Testis (tissue), 5 donors: ENCODE measurements at regions of chr1 and their contacts with region 1.

Region 1: DNA sequence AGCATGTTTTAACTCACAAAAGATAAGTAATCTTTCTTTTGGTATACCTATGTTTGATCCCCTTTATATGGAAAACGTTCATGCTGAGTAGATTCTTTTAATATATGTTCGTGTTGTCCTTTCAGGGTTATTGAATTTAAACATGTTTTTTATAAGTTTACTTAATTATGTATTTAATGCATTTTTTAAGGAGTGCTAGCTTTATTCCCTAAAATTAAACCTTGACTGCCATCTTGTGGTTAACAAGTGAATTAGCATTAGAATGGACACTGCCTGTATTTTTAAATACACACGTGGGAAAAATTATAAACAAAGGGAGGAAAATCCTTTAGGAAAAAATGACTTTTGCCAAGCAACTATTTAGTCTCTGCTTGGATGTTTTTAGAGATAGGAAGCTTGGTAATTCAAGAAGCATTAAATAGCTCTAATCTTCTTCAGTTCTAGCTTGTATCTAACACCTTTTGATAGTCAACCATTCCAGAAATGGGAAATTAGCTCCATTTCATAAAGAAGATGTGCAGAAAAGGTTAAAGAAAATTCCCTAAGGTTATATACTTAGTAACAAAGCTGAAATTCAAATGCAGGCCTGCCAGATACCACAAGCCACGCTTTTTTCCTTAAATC is 43.0 kb downstream of the UBE2U start:
- DNase-seq: no peak
- H3K4me3 ChIP-seq: no peak overlapping the region
- H3K27ac ChIP-seq: no peak overlapping the region
- H3K4me1 ChIP-seq: no peaks in the 10 kb centered on the region
- H3K27me3 ChIP-seq: no peaks in the 10 kb centered on the region
- CTCF ChIP-seq: peak; percentile 51 to 81 (median 55)
- POLR2A ChIP-seq: no peak

Region 2: DNA sequence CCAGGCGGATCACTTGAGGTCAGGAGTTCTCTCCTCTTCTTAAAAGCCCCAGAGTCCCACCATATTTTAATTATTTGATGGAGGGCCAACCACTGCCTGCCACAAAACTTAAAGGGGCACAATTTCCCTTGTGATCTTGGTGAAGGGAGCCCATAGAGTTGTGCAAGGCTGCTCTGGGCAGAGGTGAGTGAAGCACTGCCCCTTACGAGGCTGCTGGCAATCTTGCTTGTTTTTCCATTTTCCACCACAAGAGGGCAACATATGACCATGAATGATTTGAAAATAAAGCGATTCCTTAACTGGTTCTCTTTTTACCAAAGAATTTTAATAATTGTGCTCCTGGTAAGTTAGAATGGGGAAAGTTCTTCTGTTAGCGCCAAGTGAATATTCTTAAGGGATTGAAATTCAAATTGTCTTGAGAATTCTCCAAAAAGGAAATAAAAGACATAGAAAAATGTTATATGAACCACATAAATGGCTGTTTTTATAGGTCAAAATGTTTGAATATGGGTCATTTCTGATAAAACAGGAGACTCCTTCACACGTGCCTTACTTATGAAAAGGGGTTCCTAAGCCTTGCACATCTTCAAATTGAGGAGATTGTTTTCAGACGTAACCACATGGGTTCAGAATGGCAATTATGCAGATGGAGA is 630.5 kb before region 1 on chr1:
- intact Hi-C with region 1: loop called (anchors 5 kb)
- DNase-seq: peak; percentile 81
- H3K4me3 ChIP-seq: no peak overlapping the region
- H3K27ac ChIP-seq: no peak overlapping the region
- H3K4me1 ChIP-seq: peaks cover 3% of the 10 kb centered on the region
- H3K27me3 ChIP-seq: no peaks in the 10 kb centered on the region
- CTCF ChIP-seq: peak; percentile 84 to 91 (median 90)
- POLR2A ChIP-seq: no peak